Aorta (tissue), 5 donors: ENCODE measurements at regions of chr10 and their contacts with region 1.

Region 1: DNA sequence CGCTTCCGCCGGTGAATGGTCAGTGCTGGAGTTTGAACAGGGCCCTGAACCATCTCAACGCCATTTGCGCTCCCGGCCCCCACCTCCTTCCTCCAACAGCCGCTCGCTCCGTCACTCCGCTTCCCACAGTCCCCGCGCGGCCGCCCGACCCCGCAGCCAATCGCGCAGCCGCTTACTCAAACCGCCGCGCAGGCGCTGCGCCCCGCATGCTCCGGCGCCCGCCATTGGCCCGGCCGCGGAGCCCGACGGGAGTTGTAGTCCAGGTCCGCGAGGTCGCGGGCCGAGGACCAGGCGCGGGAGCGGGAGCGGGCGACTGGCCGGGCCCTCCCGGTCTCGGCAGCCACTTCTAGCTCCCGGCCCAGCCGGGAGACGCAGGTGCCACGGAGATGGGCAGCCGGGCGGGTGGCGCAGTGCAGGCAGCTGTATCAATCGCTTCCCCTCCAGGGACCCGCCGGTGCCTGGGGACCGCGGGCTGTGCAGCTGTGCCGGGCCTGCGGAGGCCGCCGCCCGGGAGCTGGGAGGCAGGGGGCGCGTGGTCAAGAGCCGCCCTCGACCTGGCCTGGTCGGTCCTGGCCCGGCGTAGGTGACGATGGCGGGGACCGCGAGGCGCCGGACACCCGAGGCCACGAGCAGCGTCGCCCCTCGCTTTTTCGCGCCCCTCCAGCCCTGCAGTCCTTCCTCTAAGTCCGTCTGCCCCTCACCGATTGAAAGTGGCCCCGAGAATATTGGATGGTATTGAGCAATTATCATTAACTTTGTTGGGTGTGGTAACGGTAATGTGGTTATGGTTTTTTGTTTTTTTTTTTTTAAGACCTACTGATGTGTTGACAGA is at the start of gene WAPL:
- DNase-seq: peak; percentile 97 to 99
- ATAC-seq: peak; percentile 100
- H3K4me3 ChIP-seq: peak within 1 kb of the TSS; percentile 77 to 84
- H3K27ac ChIP-seq: peak within 1 kb of the TSS; percentile 87 to 99
- H3K4me1 ChIP-seq: no peaks in the 10 kb centered on the region
- H3K27me3 ChIP-seq: no peaks in the 10 kb centered on the region
- total RNA-seq, gene WAPL: 34.1 to 37.3 TPM

Region 2: GRCh38 chr10:85761906-85762445 is 759.9 kb before region 1 on chr10:
- intact Hi-C with region 1: no loop called
- DNase-seq: no peak
- ATAC-seq: no peak
- H3K4me3 ChIP-seq: no peak overlapping the region
- H3K27ac ChIP-seq: no peak overlapping the region
- H3K4me1 ChIP-seq: no peaks in the 10 kb centered on the region
- H3K27me3 ChIP-seq: no peaks in the 10 kb centered on the region

Region 3: DNA sequence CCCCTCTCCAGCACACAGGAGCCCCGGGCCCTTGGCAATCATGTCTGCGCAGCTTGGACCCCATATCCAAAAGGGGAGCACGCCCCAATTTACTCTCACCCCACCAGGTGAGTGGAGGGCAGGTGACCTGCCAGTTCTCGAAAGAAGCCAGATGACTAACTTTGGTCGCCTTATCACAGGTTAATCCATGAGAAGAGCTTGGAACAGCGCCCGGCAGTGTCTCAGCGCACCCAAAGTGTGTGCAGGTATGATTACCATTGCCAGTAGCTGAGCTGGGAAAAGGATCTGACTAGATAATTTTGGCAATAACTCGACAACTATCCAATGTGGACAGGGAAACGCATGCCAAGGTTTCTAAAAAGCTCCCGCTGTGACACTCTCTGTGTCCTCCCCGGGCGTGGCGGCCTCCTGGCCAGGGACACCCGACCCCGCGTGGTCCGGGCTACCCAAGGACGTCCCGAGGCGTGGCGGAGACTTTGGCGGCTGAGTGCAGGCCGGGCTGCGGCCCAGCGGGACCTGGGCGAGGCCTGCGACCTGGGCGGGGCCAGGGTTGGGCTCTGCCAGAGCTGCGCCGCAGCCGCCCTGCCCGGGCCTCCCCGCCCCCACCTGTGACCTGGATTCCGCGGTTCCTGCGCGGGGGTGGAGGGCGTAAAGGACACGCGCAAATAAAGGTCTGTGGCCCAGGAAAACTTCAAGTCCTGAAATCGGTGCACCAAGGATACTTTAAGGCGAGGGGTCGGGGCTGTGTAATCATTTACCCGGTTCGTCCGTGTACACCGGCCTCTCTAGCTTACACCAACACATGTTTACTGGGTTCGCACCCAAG is 13.4 kb after region 1 on chr10:
- intact Hi-C with region 1: loop called in 1 of 2 experiments (anchors 1 kb)
- DNase-seq: peak; percentile 82 to 88
- ATAC-seq: peak; percentile 86
- H3K4me3 ChIP-seq: peak overlapping the region in 1 of 2 donors; percentile 37
- H3K27ac ChIP-seq: no peak overlapping the region
- H3K4me1 ChIP-seq: no peaks in the 10 kb centered on the region
- H3K27me3 ChIP-seq: no peaks in the 10 kb centered on the region